ENCODE measurements at regions of chr14 and their contacts with region 1.

Region 1: GRCh38 chr14:100900837-100901390 is 2.6 kb downstream of the RTL1 start:
- DNase-seq: peak; percentile 35
- H3K4me3 Mint-ChIP-seq: no peak overlapping the region
- H3K27ac Mint-ChIP-seq: no peak overlapping the region
- H3K4me1 Mint-ChIP-seq: peaks cover 5% of the 10 kb centered on the region
- H3K27me3 Mint-ChIP-seq: peaks cover 92% of the 10 kb centered on the region
- CTCF ChIP-seq: peak; percentile 40

Region 2: GRCh38 chr14:100056964-100057795 is 843.7 kb before region 1 on chr14:
- CTCF ChIA-PET with region 1: no interaction called
- POLR2A ChIA-PET with region 1: no interaction called
- intact Hi-C with region 1: no loop called
- DNase-seq: peak; percentile 33
- H3K4me3 Mint-ChIP-seq: no peak overlapping the region
- H3K27ac Mint-ChIP-seq: peak overlapping the region; percentile 82
- H3K4me1 Mint-ChIP-seq: peaks cover 14% of the 10 kb centered on the region
- H3K27me3 Mint-ChIP-seq: no peaks in the 10 kb centered on the region
- CTCF ChIP-seq: no peak

Region 3: GRCh38 chr14:100654814-100655740 is 245.8 kb before region 1 on chr14:
- CTCF ChIA-PET with region 1: interaction called, 3 read pairs
- POLR2A ChIA-PET with region 1: no interaction called
- intact Hi-C with region 1: loop called (anchors 1 kb)
- DNase-seq: no peak
- H3K4me3 Mint-ChIP-seq: no peak overlapping the region
- H3K27ac Mint-ChIP-seq: no peak overlapping the region
- H3K4me1 Mint-ChIP-seq: no peaks in the 10 kb centered on the region
- H3K27me3 Mint-ChIP-seq: peaks cover 11% of the 10 kb centered on the region
- CTCF ChIP-seq: peak; percentile 52

Region 4: GRCh38 chr14:100850841-100851585 is 49.9 kb before region 1 on chr14:
- CTCF ChIA-PET with region 1: interaction called, 3 read pairs
- POLR2A ChIA-PET with region 1: no interaction called
- intact Hi-C with region 1: loop called (anchors 1 kb)
- DNase-seq: peak; percentile 76
- H3K4me3 Mint-ChIP-seq: no peak overlapping the region
- H3K27ac Mint-ChIP-seq: no peak overlapping the region
- H3K4me1 Mint-ChIP-seq: no peaks in the 10 kb centered on the region
- H3K27me3 Mint-ChIP-seq: no peaks in the 10 kb centered on the region
- CTCF ChIP-seq: peak; percentile 86

Region 5: DNA sequence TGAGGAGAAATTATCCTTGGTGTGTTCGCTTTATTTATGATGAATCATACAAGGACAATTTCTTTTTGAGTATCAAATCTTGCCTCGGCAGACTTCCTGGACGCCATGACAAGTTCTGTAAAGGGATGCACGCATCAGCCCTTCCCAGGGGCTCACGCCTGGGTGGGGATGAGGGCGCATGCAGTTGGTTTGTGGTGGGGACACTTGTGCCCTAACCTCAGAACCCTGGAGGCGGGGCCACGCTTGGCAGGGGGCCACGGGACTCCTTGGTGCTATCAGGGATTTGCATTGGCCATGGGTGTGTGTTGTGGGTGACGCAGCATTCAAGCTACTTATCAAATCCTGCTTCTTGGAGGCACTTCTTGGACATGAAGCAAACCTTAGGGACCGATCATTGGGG is 146.4 kb after region 1 on chr14:
- CTCF ChIA-PET with region 1: no interaction called
- POLR2A ChIA-PET with region 1: no interaction called
- intact Hi-C with region 1: no loop called
- DNase-seq: no peak
- H3K4me3 Mint-ChIP-seq: no peak overlapping the region
- H3K27ac Mint-ChIP-seq: no peak overlapping the region
- H3K4me1 Mint-ChIP-seq: no peaks in the 10 kb centered on the region
- H3K27me3 Mint-ChIP-seq: no peaks in the 10 kb centered on the region
- CTCF ChIP-seq: no peak

Region 6: DNA sequence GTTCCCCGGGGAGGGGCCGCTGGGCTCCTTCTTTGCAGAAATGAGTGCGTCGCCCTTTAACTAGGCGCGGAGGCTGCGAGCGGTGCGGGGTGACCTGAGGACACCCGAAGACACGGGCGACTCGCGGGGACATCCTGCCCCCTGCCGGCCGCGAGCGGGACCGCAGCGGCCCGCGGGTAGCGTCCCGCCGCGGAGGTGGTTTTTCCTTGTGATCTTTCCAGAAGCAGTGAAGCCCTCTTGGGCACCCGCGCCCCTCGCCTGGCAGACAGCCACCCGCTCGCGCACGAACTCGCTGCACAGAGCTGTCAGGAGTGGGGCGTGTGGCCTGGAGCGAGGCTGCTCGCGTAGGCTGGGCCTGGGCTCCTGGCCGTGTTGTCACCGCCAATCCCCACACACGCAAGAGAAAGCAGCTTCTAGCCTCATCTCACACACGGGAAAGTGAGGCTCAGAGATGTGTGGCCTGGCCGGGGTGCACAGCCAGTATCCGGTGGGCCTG is 727.6 kb after region 1 on chr14:
- CTCF ChIA-PET with region 1: interaction called, 3 read pairs
- POLR2A ChIA-PET with region 1: no interaction called
- intact Hi-C with region 1: loop called (anchors 1 kb)
- DNase-seq: peak; percentile 68
- H3K4me3 Mint-ChIP-seq: no peak overlapping the region
- H3K27ac Mint-ChIP-seq: no peak overlapping the region
- H3K4me1 Mint-ChIP-seq: no peaks in the 10 kb centered on the region
- H3K27me3 Mint-ChIP-seq: peaks cover 39% of the 10 kb centered on the region
- CTCF ChIP-seq: peak; percentile 94